Thyroid gland (tissue), 4 donors: ENCODE measurements at regions of chr17 and their contacts with region 1.

Region 1: GRCh38 chr17:51371732-51372151 is 111.4 kb downstream of the UTP18 start:
- DNase-seq: peak; percentile 53 to 60
- H3K4me3 ChIP-seq: no peak overlapping the region
- H3K27ac ChIP-seq: no peak overlapping the region
- H3K4me1 ChIP-seq: no peaks in the 10 kb centered on the region
- H3K27me3 ChIP-seq: no peaks in the 10 kb centered on the region
- CTCF ChIP-seq: peak in 5 of 6 experiments; percentile 10 to 81 (median 64)
- POLR2A ChIP-seq: no peak

Region 2: DNA sequence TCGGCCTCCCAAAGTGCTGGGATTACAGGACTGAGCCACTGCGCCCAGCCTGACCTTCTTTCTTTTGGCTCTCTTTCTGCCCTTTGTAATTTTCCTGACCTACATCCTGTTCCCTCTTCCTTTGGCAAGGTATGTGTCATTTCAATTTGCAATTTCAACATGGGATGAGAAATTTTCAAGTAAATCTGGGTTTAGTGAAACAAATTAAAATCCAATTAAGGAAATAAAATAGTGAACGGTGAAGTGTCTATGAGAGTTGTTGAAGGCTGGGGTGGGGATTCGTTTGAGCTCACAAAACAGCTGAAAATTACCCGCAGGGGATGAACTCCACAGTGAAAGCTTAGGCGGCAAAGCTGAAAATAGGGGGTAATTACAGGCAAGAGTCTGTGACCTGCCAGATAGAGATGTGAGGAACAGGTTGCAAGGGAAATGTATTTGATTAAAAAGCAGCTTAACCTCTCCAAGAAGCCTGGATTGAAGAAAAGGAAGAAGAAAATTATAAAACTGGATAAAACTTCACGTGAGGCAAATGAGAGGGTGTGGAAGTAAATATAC is 166.3 kb after region 1 on chr17:
- intact Hi-C with region 1: loop called (anchors 5 kb)
- DNase-seq: no peak
- H3K4me3 ChIP-seq: no peak overlapping the region
- H3K27ac ChIP-seq: no peak overlapping the region
- H3K4me1 ChIP-seq: no peaks in the 10 kb centered on the region
- H3K27me3 ChIP-seq: no peaks in the 10 kb centered on the region
- CTCF ChIP-seq: no peak
- POLR2A ChIP-seq: no peak